HAP-1 (cell line): ENCODE measurements at regions of chr17 and their contacts with region 1.

Region 1: GRCh38 chr17:64289741-64290141 is 26.7 kb upstream of the TEX2 start:
- DNase-seq: no peak
- H3K4me3 ChIP-seq: no peak overlapping the region
- H3K4me1 ChIP-seq: no peaks in the 10 kb centered on the region
- H3K27me3 ChIP-seq: no peaks in the 10 kb centered on the region

Region 2: GRCh38 chr17:64020056-64020766 is 269.5 kb before region 1 on chr17 and contains the start of gene ICAM2:
- in situ Hi-C with region 1: loop called (anchors 5 kb)
- DNase-seq: no peak
- H3K4me3 ChIP-seq: no peak within 1 kb of the TSS
- H3K4me1 ChIP-seq: no peaks in the 10 kb centered on the region
- H3K27me3 ChIP-seq: no peaks in the 10 kb centered on the region; the same call in 1 of the 2 replicates

Region 3: DNA sequence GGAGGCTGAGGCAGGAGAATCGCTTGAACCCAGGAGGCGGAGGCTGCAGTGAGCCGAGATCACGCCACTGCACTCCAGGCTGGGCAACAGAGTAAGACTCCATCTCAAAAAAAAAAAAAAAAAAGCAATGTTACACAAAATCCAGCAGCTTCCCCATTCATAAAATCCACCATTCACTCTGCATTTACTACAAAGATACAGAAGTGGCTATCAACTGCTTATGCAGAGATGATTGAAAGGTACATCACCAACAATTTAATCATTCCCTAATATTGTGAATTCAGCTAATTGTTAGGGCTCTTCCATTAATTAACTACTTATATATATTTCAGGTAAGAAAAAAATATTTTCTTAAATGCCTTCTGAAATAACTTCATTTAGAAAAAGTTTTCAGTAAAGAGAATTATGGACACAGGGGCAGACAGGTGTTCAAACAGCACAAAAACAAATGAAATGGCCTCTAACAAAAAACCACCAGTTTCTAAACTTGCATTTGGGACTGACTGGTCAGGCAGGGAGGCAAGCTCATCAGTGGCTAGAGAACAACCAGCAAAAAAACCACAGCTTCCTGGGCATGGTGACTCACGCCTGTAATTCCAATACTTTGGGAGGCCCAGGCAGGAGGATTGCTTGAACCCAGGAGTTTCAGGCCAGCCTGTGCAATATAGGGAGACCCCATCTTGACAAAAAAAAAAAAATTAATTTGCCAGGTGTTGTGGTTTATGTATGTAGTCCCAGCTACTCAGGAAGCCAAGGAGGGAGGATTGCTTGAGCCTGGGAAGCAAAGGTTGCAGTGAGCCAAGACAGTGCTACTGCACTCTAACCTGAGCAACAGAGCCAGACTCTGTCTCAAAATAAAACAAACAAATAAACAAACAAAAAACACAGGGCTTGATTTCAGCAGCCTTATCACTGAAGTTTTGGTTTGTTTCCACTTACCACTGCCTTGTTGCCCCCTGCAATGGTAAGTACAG is 186.1 kb before region 1 on chr17:
- in situ Hi-C with region 1: no loop called
- DNase-seq: no peak
- H3K4me3 ChIP-seq: no peak overlapping the region
- H3K4me1 ChIP-seq: no peaks in the 10 kb centered on the region
- H3K27me3 ChIP-seq: no peaks in the 10 kb centered on the region

Region 4: GRCh38 chr17:64202675-64203344 is 86.9 kb before region 1 on chr17:
- in situ Hi-C with region 1: no loop called
- DNase-seq: no peak
- H3K4me3 ChIP-seq: no peak overlapping the region
- H3K4me1 ChIP-seq: peaks cover 36% of the 10 kb centered on the region
- H3K27me3 ChIP-seq: no peaks in the 10 kb centered on the region

Region 5: DNA sequence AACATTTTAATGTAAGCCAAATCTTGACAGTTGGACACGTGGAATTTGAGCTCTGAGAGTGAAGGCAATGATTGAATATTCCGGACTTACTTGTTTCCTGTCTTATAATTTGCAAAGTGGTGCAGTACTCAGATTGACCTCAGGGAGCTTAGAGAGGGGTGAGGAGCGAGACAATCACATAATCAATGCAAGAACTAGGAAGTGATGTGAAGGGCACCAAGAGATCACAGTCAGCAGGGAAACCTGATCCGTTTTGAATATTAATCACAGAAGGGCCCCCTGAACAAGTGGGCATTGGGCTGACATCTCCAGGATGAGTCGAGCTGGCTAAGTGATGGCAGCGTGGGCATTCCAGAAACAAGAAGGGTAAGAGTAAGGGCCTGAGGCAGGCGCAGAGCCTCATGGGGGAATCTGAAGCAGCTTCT is 52.9 kb before region 1 on chr17:
- in situ Hi-C with region 1: no loop called
- DNase-seq: peak in 1 of 2 experiments; percentile 34
- H3K4me3 ChIP-seq: no peak overlapping the region
- H3K4me1 ChIP-seq: peaks cover 11% of the 10 kb centered on the region
- H3K27me3 ChIP-seq: no peaks in the 10 kb centered on the region

Region 6: GRCh38 chr17:64547319-64547718 is 257.6 kb after region 1 on chr17:
- in situ Hi-C with region 1: no loop called
- DNase-seq: no peak
- H3K4me3 ChIP-seq: no peak overlapping the region
- H3K4me1 ChIP-seq: peaks cover 9% of the 10 kb centered on the region
- H3K27me3 ChIP-seq: no peaks in the 10 kb centered on the region